Aorta (tissue), 5 donors: ENCODE measurements at regions of chr9 and their contacts with region 1.

Region 1: GRCh38 chr9:96449845-96450612 is at the start of gene HABP4:
- DNase-seq: peak; percentile 98 to 99
- ATAC-seq: peak; percentile 99
- H3K4me3 ChIP-seq: peak within 1 kb of the TSS; percentile 92 to 94
- H3K27ac ChIP-seq: peak within 1 kb of the TSS; percentile 79 to 99
- H3K4me1 ChIP-seq: no peaks in the 10 kb centered on the region
- H3K27me3 ChIP-seq: no peaks in the 10 kb centered on the region
- total RNA-seq, gene HABP4: 29.0 to 37.0 TPM

Region 2: DNA sequence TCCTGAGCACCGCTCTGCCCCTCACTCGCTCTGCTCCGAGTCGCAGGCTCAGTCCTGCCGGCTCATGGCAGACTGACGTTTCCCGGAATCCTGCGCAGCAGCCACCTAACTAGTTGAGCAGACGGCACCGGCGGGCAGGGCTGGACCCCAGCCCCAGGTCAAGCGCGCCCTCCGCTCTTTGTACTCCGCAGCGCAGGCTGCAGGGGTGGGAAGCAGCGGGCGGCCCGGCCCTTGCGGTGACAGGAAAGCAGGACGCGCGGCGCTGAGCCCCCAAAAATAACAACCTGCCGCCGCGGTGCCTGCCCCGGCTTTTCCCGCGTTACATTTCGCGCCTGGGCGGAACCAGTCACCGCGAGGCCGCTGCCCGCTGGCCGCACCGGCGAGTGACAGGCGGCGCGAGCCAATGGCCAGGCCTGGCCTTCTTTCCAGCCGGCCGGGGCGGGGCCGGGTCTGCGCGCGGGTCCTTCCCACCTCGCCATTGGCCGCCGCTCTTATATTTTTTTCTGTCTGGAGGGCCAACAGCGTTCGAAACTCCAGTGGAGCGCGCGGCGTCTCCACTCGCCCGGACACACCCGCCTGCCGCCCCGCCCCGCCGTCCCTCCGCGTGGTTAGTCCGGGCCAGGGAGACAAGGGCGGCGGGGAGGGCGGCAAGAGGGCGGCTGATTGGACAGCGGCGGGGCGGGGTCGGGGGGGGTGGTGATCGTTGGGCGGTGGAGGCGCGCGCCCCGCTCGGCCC is 31.8 kb before region 1 on chr9 and contains the start of gene ZNF367:
- intact Hi-C with region 1: loop called (anchors 2 to 5 kb)
- DNase-seq: peak; percentile 99
- ATAC-seq: peak; percentile 96
- H3K4me3 ChIP-seq: peak within 1 kb of the TSS; percentile 71 to 84
- H3K27ac ChIP-seq: peak within 1 kb of the TSS; percentile 68 to 98
- H3K4me1 ChIP-seq: peaks cover 0 to 3% of the 10 kb centered on the region in 2 donors
- H3K27me3 ChIP-seq: no peaks in the 10 kb centered on the region
- total RNA-seq, gene ZNF367: 1.3 to 1.8 TPM

Region 3: DNA sequence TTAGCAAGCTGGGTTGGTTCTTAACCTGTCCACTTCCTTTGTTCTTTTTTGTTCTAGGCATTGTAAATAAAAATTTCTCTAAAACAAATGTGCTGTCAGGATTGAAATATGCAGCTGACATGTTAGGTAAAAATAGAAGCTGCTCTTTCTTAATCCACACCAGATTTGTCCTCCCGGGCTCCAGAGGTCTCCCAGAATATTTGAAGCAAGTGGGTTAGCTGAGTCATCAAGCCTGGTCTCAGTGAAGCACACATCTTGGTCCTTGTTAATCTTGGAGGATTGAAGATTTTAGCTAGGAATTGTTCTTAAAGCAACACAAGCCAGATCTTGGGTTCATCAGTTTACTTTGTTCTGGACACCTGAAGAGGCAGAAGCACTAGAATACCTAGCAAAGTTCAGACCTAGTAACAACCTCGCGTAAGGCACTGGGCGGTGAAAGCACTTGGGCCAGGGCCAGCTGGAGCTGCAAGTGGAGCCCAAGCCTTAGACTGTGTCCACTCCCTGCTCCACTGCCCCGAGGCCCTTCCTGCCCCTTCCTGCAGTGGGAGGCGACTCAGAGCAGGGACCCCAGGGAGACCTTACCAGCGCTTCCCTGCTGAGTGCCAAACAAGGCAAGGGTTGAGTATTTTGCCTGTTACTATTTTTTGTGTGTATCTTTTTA is 36.5 kb after region 1 on chr9:
- intact Hi-C with region 1: loop called in 1 of 2 experiments (anchors 5 kb)
- DNase-seq: peak in 1 of 2 donors; percentile 84
- ATAC-seq: peak; percentile 88
- H3K4me3 ChIP-seq: no peak overlapping the region
- H3K27ac ChIP-seq: peak overlapping the region; percentile 48 to 91
- H3K4me1 ChIP-seq: peaks cover 0 to 10% of the 10 kb centered on the region in 2 donors
- H3K27me3 ChIP-seq: no peaks in the 10 kb centered on the region

Region 4: GRCh38 chr9:96619491-96620154 is 169.6 kb after region 1 on chr9 and contains the start of gene CDC14B:
- intact Hi-C with region 1: loop called (anchors 2 to 10 kb)
- DNase-seq: peak; percentile 93 to 94
- ATAC-seq: peak; percentile 71
- H3K4me3 ChIP-seq: peak within 1 kb of the TSS; percentile 72 to 89
- H3K27ac ChIP-seq: peak within 1 kb of the TSS; percentile 38 to 97
- H3K4me1 ChIP-seq: no peaks in the 10 kb centered on the region
- H3K27me3 ChIP-seq: no peaks in the 10 kb centered on the region
- total RNA-seq, gene CDC14B: 27.9 to 37.9 TPM